Panc1 (cell line): ENCODE measurements at regions of chr2 and their contacts with region 1.

Region 1: DNA sequence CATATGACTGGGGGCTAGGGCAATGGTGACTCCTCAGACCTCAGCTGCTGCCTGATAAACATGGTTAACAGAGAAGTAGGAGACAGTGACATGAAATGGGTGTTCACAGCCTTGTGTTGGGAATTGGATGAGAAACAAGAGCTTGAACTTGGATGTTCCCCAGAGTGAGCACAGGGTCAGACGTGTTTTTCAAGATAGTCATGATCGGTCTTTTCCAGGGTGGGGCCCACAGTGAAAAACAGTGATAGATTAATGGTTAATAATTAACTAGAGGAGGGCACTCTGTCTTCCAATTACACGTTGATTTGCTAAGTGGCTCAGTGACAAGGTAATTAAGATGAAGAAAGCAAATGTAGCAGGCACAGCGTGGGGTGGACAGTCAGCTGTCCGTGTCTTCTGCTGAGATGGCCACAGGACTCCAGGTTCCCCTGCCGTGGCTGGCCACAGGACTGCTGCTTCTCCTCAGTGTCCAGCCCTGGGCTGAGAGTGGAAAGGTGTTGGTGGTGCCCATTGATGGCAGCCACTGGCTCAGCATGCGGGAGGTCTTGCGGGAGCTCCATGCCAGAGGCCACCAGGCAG is at the start of gene UGT1A3:
- DNase-seq: no peak
- ATAC-seq: no peak
- H3K4me3 ChIP-seq: no peak within 1 kb of the TSS
- H3K27ac ChIP-seq: no peak within 1 kb of the TSS
- H3K4me1 ChIP-seq: no peaks in the 10 kb centered on the region
- H3K27me3 ChIP-seq: no peaks in the 10 kb centered on the region
- CTCF ChIP-seq: no peak
- total RNA-seq, gene UGT1A3: not detected

Region 2: GRCh38 chr2:233611284-233611683 is 117.5 kb before region 1 on chr2:
- CTCF ChIA-PET with region 1: no interaction called
- POLR2A ChIA-PET with region 1: no interaction called
- in situ Hi-C with region 1: no loop called
- intact Hi-C with region 1: loop called (anchors 10 kb)
- DNase-seq: no peak
- ATAC-seq: no peak
- H3K4me3 ChIP-seq: no peak overlapping the region
- H3K27ac ChIP-seq: no peak overlapping the region
- H3K4me1 ChIP-seq: no peaks in the 10 kb centered on the region
- H3K27me3 ChIP-seq: no peaks in the 10 kb centered on the region
- CTCF ChIP-seq: no peak